ENCODE measurements at regions of chr7 and their contacts with region 1.

Region 1: GRCh38 chr7:19121977-19122588 is 4.6 kb upstream of the TWIST1 start:
- DNase-seq: no peak

Region 2: DNA sequence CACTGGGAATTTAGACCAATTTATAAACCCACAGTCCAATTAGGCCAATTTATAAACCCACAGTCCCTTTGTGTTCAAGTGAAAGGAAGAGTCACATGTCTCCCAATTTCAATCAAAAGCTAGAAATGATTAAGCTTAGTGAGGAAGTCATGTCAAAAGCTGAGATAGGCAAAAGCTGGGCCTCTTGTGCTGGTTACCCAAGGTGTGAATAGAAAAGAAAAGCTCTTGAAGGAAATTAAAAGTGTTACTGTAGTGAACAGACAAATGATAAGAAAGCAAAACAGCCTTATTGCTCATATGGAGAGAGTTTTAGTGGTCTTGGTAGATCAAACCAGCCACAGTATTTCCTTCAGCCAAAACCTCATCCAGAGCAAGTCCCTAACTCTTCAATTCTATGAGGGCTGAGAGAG is 381.5 kb before region 1 on chr7:
- intact Hi-C with region 1: no loop called
- DNase-seq: no peak

Region 3: DNA sequence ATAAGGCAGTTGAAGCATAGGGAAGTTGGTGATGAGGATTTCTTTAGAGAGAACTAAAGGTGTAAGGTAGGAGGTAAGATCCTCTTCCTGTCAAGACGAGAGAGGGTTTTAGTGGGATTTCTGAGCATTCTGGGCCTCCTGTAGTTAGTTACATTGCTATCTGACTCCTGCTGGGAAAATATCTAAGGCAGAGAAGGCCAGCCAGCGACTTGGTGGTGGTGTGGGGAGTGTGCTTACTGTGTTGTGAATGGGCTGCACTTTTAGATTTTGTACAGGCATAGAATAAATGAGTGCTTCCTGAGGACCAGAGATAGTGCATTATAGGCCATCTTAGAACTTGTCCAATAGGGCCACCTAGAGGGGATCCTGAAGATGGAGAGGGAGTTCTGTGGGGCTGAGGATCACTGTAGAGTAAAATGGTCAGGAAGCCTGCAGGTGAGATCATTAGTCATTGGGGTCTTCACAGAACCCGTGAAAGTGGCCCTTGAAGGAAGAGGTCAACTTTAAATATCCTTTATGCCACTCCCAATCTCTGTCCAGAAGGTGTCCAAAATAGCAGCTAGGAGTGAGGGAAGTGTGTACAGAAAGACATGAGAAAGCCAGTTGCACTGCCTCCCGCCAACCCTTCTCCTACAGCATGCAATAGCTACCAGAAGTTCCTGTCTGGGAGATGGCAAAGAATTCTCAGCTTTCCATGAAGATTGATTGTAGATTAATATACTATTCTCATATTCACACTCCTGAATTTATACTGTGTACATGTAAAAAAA is 320.1 kb after region 1 on chr7:
- intact Hi-C with region 1: loop called (anchors 2 kb)
- DNase-seq: no peak

Region 4: GRCh38 chr7:19665399-19666008 is 543.4 kb after region 1 on chr7:
- intact Hi-C with region 1: loop called (anchors 5 kb)
- DNase-seq: no peak

Region 5: DNA sequence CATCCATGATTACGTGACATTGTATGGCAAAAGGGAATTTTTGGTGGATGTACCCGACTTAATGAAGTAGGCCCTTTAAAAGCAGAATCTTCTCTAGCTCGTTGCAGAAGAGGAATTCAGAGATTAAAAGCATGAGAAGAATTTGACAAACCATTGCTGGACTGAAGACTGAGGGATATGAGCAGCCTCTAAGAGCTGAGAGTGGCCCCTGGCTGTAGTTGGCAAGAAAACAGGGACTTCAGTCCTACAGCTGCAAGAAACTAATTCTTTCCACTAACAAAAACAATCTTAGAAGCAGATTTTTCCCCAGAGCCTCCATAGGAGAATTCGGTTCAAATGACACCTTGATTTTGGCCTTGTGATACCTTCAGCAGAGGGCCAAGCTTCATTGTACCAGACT is 1061.0 kb after region 1 on chr7:
- intact Hi-C with region 1: no loop called
- DNase-seq: no peak